Activated CD4-positive, alpha-beta memory T cell treated with anti-CD3 and anti-CD28 coated beads for 36 hours (primary cell): ENCODE measurements at regions of chr2 and their contacts with region 1.

Region 1: GRCh38 chr2:239991689-239992314 is 33.3 kb downstream of the NDUFA10 start:
- DNase-seq: no peak
- H3K4me3 Mint-ChIP-seq: no peak overlapping the region
- H3K27ac Mint-ChIP-seq: no peak overlapping the region
- H3K4me1 Mint-ChIP-seq: no peaks in the 10 kb centered on the region
- H3K27me3 Mint-ChIP-seq: no peaks in the 10 kb centered on the region

Region 2: GRCh38 chr2:239035361-239036078 is 956.3 kb before region 1 on chr2:
- CTCF ChIA-PET with region 1: no interaction called
- POLR2A ChIA-PET with region 1: no interaction called
- intact Hi-C with region 1: loop called (anchors 2 kb)
- DNase-seq: peak; percentile 76
- H3K4me3 Mint-ChIP-seq: no peak overlapping the region
- H3K27ac Mint-ChIP-seq: no peak overlapping the region
- H3K4me1 Mint-ChIP-seq: no peaks in the 10 kb centered on the region
- H3K27me3 Mint-ChIP-seq: peaks cover 5% of the 10 kb centered on the region

Region 3: GRCh38 chr2:239308661-239309397 is 683.0 kb before region 1 on chr2:
- CTCF ChIA-PET with region 1: no interaction called
- POLR2A ChIA-PET with region 1: no interaction called
- intact Hi-C with region 1: no loop called
- DNase-seq: peak; percentile 3
- H3K4me3 Mint-ChIP-seq: no peak overlapping the region
- H3K27ac Mint-ChIP-seq: no peak overlapping the region
- H3K4me1 Mint-ChIP-seq: peaks cover 14% of the 10 kb centered on the region
- H3K27me3 Mint-ChIP-seq: no peaks in the 10 kb centered on the region

Region 4: GRCh38 chr2:239934571-239935171 is 57.1 kb before region 1 on chr2:
- CTCF ChIA-PET with region 1: interaction called, 19 read pairs
- POLR2A ChIA-PET with region 1: no interaction called
- intact Hi-C with region 1: loop called (anchors 2 kb)
- DNase-seq: peak; percentile 75
- H3K4me3 Mint-ChIP-seq: no peak overlapping the region
- H3K27ac Mint-ChIP-seq: no peak overlapping the region
- H3K4me1 Mint-ChIP-seq: peaks cover 8% of the 10 kb centered on the region
- H3K27me3 Mint-ChIP-seq: no peaks in the 10 kb centered on the region

Region 5: GRCh38 chr2:239970004-239970623 is 21.7 kb before region 1 on chr2:
- CTCF ChIA-PET with region 1: no interaction called
- POLR2A ChIA-PET with region 1: no interaction called
- intact Hi-C with region 1: no loop called
- DNase-seq: no peak
- H3K4me3 Mint-ChIP-seq: no peak overlapping the region
- H3K27ac Mint-ChIP-seq: no peak overlapping the region
- H3K4me1 Mint-ChIP-seq: no peaks in the 10 kb centered on the region
- H3K27me3 Mint-ChIP-seq: no peaks in the 10 kb centered on the region

Region 6: GRCh38 chr2:240021488-240022104 is 29.8 kb after region 1 on chr2:
- CTCF ChIA-PET with region 1: interaction called, 10 read pairs
- POLR2A ChIA-PET with region 1: no interaction called
- intact Hi-C with region 1: no loop called
- DNase-seq: peak; percentile 76
- H3K4me3 Mint-ChIP-seq: no peak overlapping the region
- H3K27ac Mint-ChIP-seq: no peak overlapping the region
- H3K4me1 Mint-ChIP-seq: peaks cover 19% of the 10 kb centered on the region
- H3K27me3 Mint-ChIP-seq: no peaks in the 10 kb centered on the region

Region 7: GRCh38 chr2:240467394-240468302 is 475.8 kb after region 1 on chr2:
- CTCF ChIA-PET with region 1: no interaction called
- POLR2A ChIA-PET with region 1: no interaction called
- intact Hi-C with region 1: no loop called
- DNase-seq: peak; percentile 7
- H3K4me3 Mint-ChIP-seq: no peak overlapping the region
- H3K27ac Mint-ChIP-seq: no peak overlapping the region
- H3K4me1 Mint-ChIP-seq: no peaks in the 10 kb centered on the region
- H3K27me3 Mint-ChIP-seq: no peaks in the 10 kb centered on the region

Region 8: DNA sequence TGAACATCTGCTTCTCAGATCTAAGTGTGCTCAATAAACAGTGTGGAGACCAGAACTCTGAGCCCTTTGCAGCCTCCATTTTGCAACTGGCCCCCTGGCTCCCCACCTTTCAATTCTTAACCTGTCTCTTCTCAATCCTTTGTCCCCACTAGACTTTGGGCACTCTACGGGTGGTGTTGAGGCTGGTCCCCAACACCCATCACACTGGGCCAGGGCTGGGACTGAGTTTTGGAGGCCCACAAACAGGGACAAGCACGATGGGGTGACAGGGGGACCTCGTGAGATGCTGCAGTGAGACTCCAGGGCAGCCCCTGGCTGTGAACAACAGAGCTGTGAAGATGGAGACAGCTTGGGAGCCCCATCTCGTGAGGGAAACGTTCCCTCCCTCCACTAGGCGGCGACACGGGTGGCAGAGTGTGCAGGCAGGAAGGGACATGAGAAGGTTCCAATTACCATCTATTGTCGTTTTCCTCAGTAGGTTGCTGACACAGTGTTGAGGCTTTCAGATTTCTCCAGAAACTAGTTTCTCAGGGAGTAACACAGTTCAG is 564.8 kb after region 1 on chr2:
- CTCF ChIA-PET with region 1: no interaction called
- POLR2A ChIA-PET with region 1: no interaction called
- intact Hi-C with region 1: no loop called
- DNase-seq: peak; percentile 82
- H3K4me3 Mint-ChIP-seq: no peak overlapping the region
- H3K27ac Mint-ChIP-seq: no peak overlapping the region
- H3K4me1 Mint-ChIP-seq: peaks cover 37% of the 10 kb centered on the region
- H3K27me3 Mint-ChIP-seq: no peaks in the 10 kb centered on the region